Dendritic cell treated with granulocyte-macrophage colony-stimulating factor and Interleukin-4, amounts not matched to agents 40 ng/mL and 50 ng/mL, for 4 days (primary cell): ENCODE measurements at regions of chr1 and their contacts with region 1.

Region 1: GRCh38 chr1:2545759-2546514 is 10.2 kb upstream of the TNFRSF14 start:
- H3K4me3 Mint-ChIP-seq: peak overlapping the region; percentile 86
- H3K27ac Mint-ChIP-seq: peak overlapping the region; percentile 92
- H3K4me1 Mint-ChIP-seq: peaks cover 53% of the 10 kb centered on the region
- H3K27me3 Mint-ChIP-seq: peaks cover 37% of the 10 kb centered on the region

Region 2: DNA sequence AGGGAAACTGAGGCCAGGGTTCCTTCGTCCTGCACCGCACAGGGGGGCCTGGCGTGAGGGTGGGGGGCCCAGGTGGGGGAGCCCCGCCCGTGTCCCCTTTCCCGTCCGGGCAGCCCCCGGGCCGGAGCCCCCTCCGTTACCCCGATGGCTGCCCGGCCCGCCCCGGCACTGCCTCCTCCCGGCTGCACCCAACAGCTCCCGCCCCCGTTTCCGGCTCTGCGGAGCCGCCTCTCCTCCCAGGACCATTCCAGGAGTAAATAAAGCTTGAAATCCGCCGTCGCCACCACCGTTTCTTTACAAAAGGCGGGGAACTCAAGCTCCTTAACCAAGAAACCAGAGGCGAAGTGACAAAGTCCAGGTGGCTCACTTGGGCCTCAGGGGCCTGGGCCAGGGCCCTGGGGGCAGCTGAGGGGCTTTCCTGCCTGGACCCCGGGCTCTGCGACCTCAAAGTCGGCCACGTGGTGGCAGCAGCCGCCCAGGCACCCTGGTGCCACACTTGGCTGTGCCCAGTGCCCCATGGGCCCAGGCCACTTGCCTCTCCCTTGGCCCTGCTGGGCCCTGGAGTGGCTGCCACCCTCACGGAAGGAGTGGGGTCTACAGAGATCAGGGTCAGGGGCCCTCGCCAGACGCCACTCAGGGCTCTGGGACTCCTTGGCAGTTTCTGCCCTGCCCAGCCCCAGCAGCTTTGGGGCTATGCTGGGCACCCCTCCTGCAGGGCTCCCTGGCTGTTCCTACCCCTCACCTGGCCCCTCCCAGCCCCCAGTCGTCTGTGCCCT is 350.9 kb before region 1 on chr1:
- intact Hi-C with region 1: loop called (anchors 5 kb)
- H3K4me3 Mint-ChIP-seq: peak overlapping the region; percentile 80
- H3K27ac Mint-ChIP-seq: peak overlapping the region; percentile 91
- H3K4me1 Mint-ChIP-seq: peaks cover 52% of the 10 kb centered on the region
- H3K27me3 Mint-ChIP-seq: no peaks in the 10 kb centered on the region

Region 3: DNA sequence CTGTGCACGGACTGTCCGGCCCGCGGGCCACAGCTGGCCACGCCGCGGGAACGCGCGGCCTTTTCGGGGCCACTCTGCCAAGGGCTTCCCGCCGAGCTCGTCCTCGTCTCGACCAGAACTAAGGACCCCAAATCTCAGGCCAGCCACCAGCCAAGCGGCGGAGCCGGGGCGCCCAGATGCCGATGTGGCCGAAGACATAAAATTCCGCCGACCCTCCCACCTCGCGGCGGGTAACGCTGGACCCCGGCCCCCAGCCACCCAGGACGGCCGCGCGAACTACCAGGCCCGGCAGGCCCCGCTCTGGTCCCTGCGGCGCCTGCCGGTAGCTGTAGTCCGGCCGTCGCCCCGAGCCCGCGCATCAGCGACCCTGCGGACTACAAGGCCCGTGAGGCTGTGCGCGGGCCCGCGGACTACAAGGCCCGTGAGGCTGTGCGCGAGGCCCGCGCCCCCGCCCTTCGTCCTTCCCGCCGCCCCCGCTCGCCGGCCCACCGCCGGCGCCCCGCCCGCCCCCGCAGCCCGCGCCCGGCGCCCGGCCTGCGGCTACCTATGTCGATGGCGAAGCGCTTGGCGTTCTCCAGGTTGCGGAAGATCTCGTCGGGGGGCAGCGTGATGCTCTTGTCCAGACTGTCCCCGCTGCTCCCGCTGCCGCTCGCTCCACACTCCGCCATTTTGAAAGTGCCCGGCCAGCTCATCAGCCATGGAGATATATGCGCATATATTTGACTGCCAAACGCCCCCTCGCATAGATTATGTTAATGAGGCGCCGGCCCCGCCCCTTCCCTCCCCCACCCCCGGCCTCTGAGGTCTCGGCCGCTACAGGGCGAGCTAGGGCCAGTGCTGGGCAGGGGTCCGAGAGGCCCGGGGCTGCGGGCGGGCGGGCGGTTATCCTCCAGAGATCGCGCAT is 19.8 kb before region 1 on chr1 and contains the start of gene PANK4:
- intact Hi-C with region 1: loop called (anchors 1 kb)
- H3K4me3 Mint-ChIP-seq: peak within 1 kb of the TSS; percentile 88
- H3K27ac Mint-ChIP-seq: peak within 1 kb of the TSS; percentile 90
- H3K4me1 Mint-ChIP-seq: peaks cover 40% of the 10 kb centered on the region
- H3K27me3 Mint-ChIP-seq: peaks cover 41% of the 10 kb centered on the region

Region 4: GRCh38 chr1:2556277-2556677 is 10.3 kb after region 1 on chr1 and contains the start of gene TNFRSF14:
- intact Hi-C with region 1: loop called (anchors 1 kb)
- H3K4me3 Mint-ChIP-seq: peak within 1 kb of the TSS; percentile 84
- H3K27ac Mint-ChIP-seq: peak within 1 kb of the TSS; percentile 96
- H3K4me1 Mint-ChIP-seq: peaks cover 66% of the 10 kb centered on the region
- H3K27me3 Mint-ChIP-seq: peaks cover 9% of the 10 kb centered on the region

Region 5: GRCh38 chr1:2586154-2587070 is 40.5 kb after region 1 on chr1 and contains the start of gene PRXL2B:
- intact Hi-C with region 1: loop called (anchors 1 kb)
- H3K4me3 Mint-ChIP-seq: peak within 1 kb of the TSS; percentile 86
- H3K27ac Mint-ChIP-seq: peak within 1 kb of the TSS; percentile 98
- H3K4me1 Mint-ChIP-seq: peaks cover 54% of the 10 kb centered on the region
- H3K27me3 Mint-ChIP-seq: peaks cover 13% of the 10 kb centered on the region